Calu3 (cell line): ENCODE measurements at regions of chr11 and their contacts with region 1.

Region 1: GRCh38 chr11:57426929-57427726 is at the start of gene SLC43A3:
- DNase-seq: peak; percentile 80
- H3K4me3 Mint-ChIP-seq: peak within 1 kb of the TSS; percentile 78
- H3K27ac Mint-ChIP-seq: peak within 1 kb of the TSS; percentile 93
- H3K4me1 Mint-ChIP-seq: peaks cover 50% of the 10 kb centered on the region
- H3K27me3 Mint-ChIP-seq: no peaks in the 10 kb centered on the region
- CTCF ChIP-seq: no peak
- total RNA-seq, gene SLC43A3: 91.8 and 127 TPM in 2 replicates

Region 2: GRCh38 chr11:57368106-57368844 is 58.9 kb before region 1 on chr11:
- CTCF ChIA-PET with region 1: interaction called, 11 read pairs
- intact Hi-C with region 1: no loop called
- DNase-seq: no peak
- H3K4me3 Mint-ChIP-seq: no peak overlapping the region
- H3K27ac Mint-ChIP-seq: no peak overlapping the region
- H3K4me1 Mint-ChIP-seq: no peaks in the 10 kb centered on the region
- H3K27me3 Mint-ChIP-seq: peaks cover 64% of the 10 kb centered on the region
- CTCF ChIP-seq: no peak

Region 3: DNA sequence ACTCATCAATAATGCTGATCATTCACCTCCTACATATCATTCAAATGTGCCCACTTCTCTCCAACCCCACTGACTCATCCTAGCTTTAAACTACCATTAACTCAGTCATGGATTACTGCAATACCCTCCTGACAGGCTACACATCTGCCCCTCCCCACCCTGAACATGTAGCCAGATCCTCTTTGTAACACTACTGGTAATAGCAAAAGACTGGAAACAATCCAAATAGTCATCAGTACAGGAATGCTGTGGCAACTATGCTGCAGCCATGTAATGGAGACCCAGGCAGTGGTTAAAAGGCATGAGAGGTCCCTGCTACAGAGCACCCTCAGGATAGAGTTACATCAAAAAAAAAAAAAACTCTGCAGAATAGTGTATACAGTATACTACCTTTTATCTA is 16.8 kb before region 1 on chr11:
- CTCF ChIA-PET with region 1: interaction called, 5 read pairs
- intact Hi-C with region 1: loop called (anchors 2 kb)
- DNase-seq: no peak
- H3K4me3 Mint-ChIP-seq: no peak overlapping the region
- H3K27ac Mint-ChIP-seq: no peak overlapping the region
- H3K4me1 Mint-ChIP-seq: peaks cover 29% of the 10 kb centered on the region
- H3K27me3 Mint-ChIP-seq: no peaks in the 10 kb centered on the region
- CTCF ChIP-seq: no peak